H1 (cell line): ENCODE measurements at regions of chr15 and their contacts with region 1.

Region 1: GRCh38 chr15:95025924-95026728 is 794.8 kb downstream of the MCTP2 start:
- DNase-seq: peak in 1 of 2 experiments; percentile 79
- H3K4me3 ChIP-seq: no peak overlapping the region
- H3K27ac ChIP-seq: no peak overlapping the region
- H3K4me1 ChIP-seq: no peaks in the 10 kb centered on the region
- H3K27me3 ChIP-seq: no peaks in the 10 kb centered on the region
- CTCF ChIP-seq: peak; percentile 11 to 65 (median 62)
- EP300 ChIP-seq: no peak
- POLR2A ChIP-seq: no peak
- RAD21 ChIP-seq: peak; percentile 84 to 89

Region 2: DNA sequence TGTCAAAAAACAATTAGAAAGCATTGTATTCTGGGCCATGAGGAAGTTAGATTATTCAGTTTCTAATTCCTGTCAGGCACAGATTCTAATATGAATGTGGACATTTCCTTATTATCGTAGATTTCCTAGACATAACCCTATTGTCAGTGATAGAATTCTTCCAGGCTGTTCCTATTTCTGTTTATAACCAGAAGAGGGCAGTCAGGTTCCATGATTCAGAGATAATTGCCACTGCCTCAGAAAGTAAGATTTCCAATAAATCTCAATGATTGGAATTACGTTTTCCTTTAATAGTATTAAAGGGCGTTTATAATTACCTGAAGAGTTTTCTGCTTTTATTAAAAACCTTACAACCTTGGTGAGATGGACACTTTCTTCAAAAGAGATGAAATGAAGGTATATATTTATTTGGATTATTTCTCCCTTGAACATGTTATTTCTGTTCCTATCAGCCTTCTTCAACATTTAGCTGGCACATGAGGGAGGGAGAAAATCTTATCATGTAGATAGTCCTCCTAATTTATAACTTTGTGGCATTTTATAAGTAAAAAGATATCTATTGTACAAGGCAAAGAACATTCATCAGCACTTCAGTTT is 355.6 kb before region 1 on chr15:
- CTCF ChIA-PET with region 1: interaction called, 56 read pairs
- POLR2A ChIA-PET with region 1: no interaction called
- DNase-seq: no peak
- H3K4me3 ChIP-seq: no peak overlapping the region
- H3K27ac ChIP-seq: no peak overlapping the region
- H3K4me1 ChIP-seq: peaks cover 0 to 7% (median 5%) of the 10 kb centered on the region in 4 experiments; a peak in 4 of 7 replicates
- H3K27me3 ChIP-seq: no peaks in the 10 kb centered on the region
- CTCF ChIP-seq: peak in 2 of 3 experiments; percentile 48 to 64; a peak in 2 of 4 replicates
- EP300 ChIP-seq: no peak
- POLR2A ChIP-seq: no peak
- RAD21 ChIP-seq: peak; percentile 87 to 90

Region 3: GRCh38 chr15:95051861-95052260 is 25.7 kb after region 1 on chr15:
- CTCF ChIA-PET with region 1: interaction called, 10 read pairs
- POLR2A ChIA-PET with region 1: no interaction called
- DNase-seq: no peak
- H3K4me3 ChIP-seq: no peak overlapping the region
- H3K27ac ChIP-seq: no peak overlapping the region
- H3K4me1 ChIP-seq: no peaks in the 10 kb centered on the region
- H3K27me3 ChIP-seq: no peaks in the 10 kb centered on the region
- CTCF ChIP-seq: no peak
- EP300 ChIP-seq: no peak
- POLR2A ChIP-seq: no peak
- RAD21 ChIP-seq: no peak

Region 4: GRCh38 chr15:95284933-95285421 is 258.9 kb after region 1 on chr15:
- CTCF ChIA-PET with region 1: interaction called, 27 read pairs
- POLR2A ChIA-PET with region 1: no interaction called
- DNase-seq: no peak
- H3K4me3 ChIP-seq: no peak overlapping the region
- H3K27ac ChIP-seq: no peak overlapping the region
- H3K4me1 ChIP-seq: peaks cover 0 to 14% (median 8%) of the 10 kb centered on the region in 4 experiments; a peak in 5 of 7 replicates
- H3K27me3 ChIP-seq: peaks cover 0 to 1% (median 0%) of the 10 kb centered on the region in 4 experiments; a peak in 1 of 7 replicates
- CTCF ChIP-seq: no peak
- EP300 ChIP-seq: no peak
- POLR2A ChIP-seq: no peak
- RAD21 ChIP-seq: peak; percentile 45 to 54; a peak in 3 of 4 replicates